Activated B cell treated with CpG ODN at 0.5 μM for 24 hours (primary cell): ENCODE measurements at regions of chr6 and their contacts with region 1.

Region 1: GRCh38 chr6:149246691-149247384 is 70.7 kb upstream of the TAB2 start:
- DNase-seq: peak; percentile 46
- ATAC-seq: peak; percentile 97
- H3K4me3 Mint-ChIP-seq: peak overlapping the region; percentile 82
- H3K27ac Mint-ChIP-seq: peak overlapping the region; percentile 88
- H3K4me1 Mint-ChIP-seq: peaks cover 50% of the 10 kb centered on the region
- H3K27me3 Mint-ChIP-seq: no peaks in the 10 kb centered on the region
- CTCF ChIP-seq: no peak

Region 2: GRCh38 chr6:149211046-149211571 is 35.7 kb before region 1 on chr6:
- CTCF ChIA-PET with region 1: no interaction called
- POLR2A ChIA-PET with region 1: no interaction called
- intact Hi-C with region 1: loop called (anchors 5 kb)
- DNase-seq: no peak
- ATAC-seq: peak; percentile 96
- H3K4me3 Mint-ChIP-seq: no peak overlapping the region
- H3K27ac Mint-ChIP-seq: peak overlapping the region; percentile 87
- H3K4me1 Mint-ChIP-seq: peaks cover 12% of the 10 kb centered on the region
- H3K27me3 Mint-ChIP-seq: no peaks in the 10 kb centered on the region
- CTCF ChIP-seq: no peak